ENCODE measurements at regions of chr2 and their contacts with region 1.

Region 1: GRCh38 chr2:74104839-74105238 is 42.9 kb downstream of the BOLA3 start:
- DNase-seq: no peak
- H3K4me3 ChIP-seq: no peak overlapping the region
- H3K27ac ChIP-seq: no peak overlapping the region
- H3K27me3 ChIP-seq: no peaks in the 10 kb centered on the region
- CTCF ChIP-seq: peak; percentile 33

Region 2: GRCh38 chr2:74138600-74139323 is 33.9 kb after region 1 on chr2:
- CTCF ChIA-PET with region 1: no interaction called
- POLR2A ChIA-PET with region 1: interaction called, 10 read pairs
- DNase-seq: no peak
- H3K4me3 ChIP-seq: no peak overlapping the region
- H3K27ac ChIP-seq: no peak overlapping the region
- H3K27me3 ChIP-seq: no peaks in the 10 kb centered on the region
- CTCF ChIP-seq: peak; percentile 24

Measured in AG04450 (cell line).